SK-N-SH (cell line): ENCODE measurements at regions of chr3 and their contacts with region 1.

Region 1: DNA sequence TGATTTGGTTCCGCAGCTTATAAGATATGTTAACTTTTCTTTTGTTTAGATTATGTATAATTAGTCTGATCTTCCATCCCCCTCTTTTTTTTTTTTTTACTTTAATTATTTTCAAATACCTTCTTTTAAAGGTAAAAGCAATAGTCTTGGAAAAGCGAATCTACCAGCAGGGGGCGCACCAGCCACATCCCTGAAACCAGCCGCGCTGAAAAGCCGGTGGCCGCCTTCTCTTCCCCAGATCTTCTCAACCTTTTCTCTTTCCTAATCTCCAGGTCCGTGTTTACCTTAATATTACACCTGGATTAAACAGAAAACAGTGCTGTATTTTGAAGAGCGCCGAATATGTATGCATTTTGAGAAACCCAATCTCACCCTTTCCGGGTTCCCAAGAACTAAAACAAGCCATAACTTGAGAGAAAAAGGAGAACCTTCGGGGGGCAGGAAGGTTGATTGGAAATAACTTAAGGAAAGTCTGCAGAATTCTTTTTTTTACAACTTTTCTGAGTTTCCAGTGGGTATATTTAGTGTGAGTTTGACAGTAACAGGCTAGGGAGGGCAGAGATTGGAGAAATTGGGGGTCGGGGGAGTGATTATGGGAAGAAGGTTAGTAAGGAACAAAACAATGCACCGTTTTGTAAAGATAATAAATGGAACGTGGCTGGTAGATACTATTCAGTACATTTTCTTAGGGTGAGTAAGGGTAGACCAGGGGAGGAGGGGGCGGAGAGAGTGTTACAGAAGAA is 2.0 kb upstream of the SOX2 start:
- DNase-seq: peak; percentile 72
- H3K4me3 ChIP-seq: peak overlapping the region in 1 of 2 experiments; percentile 37; a peak in 1 of 4 replicates
- H3K27ac ChIP-seq: no peak overlapping the region
- H3K4me1 ChIP-seq: peaks cover 0 to 13% of the 10 kb centered on the region in 2 experiments; a peak in 1 of 4 replicates
- H3K27me3 ChIP-seq: peaks cover 14% of the 10 kb centered on the region; the same call in 1 of the 2 replicates
- CTCF ChIP-seq: peak; percentile 90
- EP300 ChIP-seq: no peak
- RAD21 ChIP-seq: peak; percentile 88

Region 2: GRCh38 chr3:182258538-182259177 is 549.0 kb after region 1 on chr3:
- CTCF ChIA-PET with region 1: interaction called, 24 read pairs
- POLR2A ChIA-PET with region 1: no interaction called
- DNase-seq: peak; percentile 56
- H3K4me3 ChIP-seq: peak overlapping the region in 1 of 2 experiments; percentile 36; a peak in 1 of 4 replicates
- H3K27ac ChIP-seq: no peak overlapping the region
- H3K4me1 ChIP-seq: no peaks in the 10 kb centered on the region
- H3K27me3 ChIP-seq: no peaks in the 10 kb centered on the region
- CTCF ChIP-seq: peak; percentile 72
- EP300 ChIP-seq: no peak
- RAD21 ChIP-seq: peak; percentile 97